WTC11 (cell line): ENCODE measurements at regions of chr10 and their contacts with region 1.

Region 1: GRCh38 chr10:67788025-67788886 is 49.7 kb downstream of the DNAJC12 start:
- DNase-seq: peak; percentile 92
- ATAC-seq: peak; percentile 97
- H3K4me3 Mint-ChIP-seq: peak overlapping the region; percentile 25; the same call in 1 of the 2 replicates
- H3K27ac Mint-ChIP-seq: no peak overlapping the region
- H3K4me1 Mint-ChIP-seq: peaks cover 34% of the 10 kb centered on the region
- H3K27me3 Mint-ChIP-seq: no peaks in the 10 kb centered on the region; the same call in 1 of the 2 replicates
- CTCF ChIP-seq: peak; percentile 87

Region 2: GRCh38 chr10:67452892-67453291 is 335.4 kb before region 1 on chr10:
- CTCF ChIA-PET with region 1: no interaction called
- POLR2A ChIA-PET with region 1: no interaction called
- DNase-seq: no peak
- ATAC-seq: no peak
- H3K4me3 Mint-ChIP-seq: no peak overlapping the region
- H3K27ac Mint-ChIP-seq: no peak overlapping the region
- H3K4me1 Mint-ChIP-seq: no peaks in the 10 kb centered on the region
- H3K27me3 Mint-ChIP-seq: no peaks in the 10 kb centered on the region
- CTCF ChIP-seq: no peak

Region 3: GRCh38 chr10:67764012-67764822 is 24.0 kb before region 1 on chr10:
- CTCF ChIA-PET with region 1: interaction called, 14 read pairs
- POLR2A ChIA-PET with region 1: interaction called, 9 read pairs
- DNase-seq: peak; percentile 95
- ATAC-seq: peak; percentile 76
- H3K4me3 Mint-ChIP-seq: peak overlapping the region; percentile 89
- H3K27ac Mint-ChIP-seq: peak overlapping the region; percentile 48
- H3K4me1 Mint-ChIP-seq: peaks cover 4% of the 10 kb centered on the region
- H3K27me3 Mint-ChIP-seq: peaks cover 21% of the 10 kb centered on the region
- CTCF ChIP-seq: no peak

Region 4: DNA sequence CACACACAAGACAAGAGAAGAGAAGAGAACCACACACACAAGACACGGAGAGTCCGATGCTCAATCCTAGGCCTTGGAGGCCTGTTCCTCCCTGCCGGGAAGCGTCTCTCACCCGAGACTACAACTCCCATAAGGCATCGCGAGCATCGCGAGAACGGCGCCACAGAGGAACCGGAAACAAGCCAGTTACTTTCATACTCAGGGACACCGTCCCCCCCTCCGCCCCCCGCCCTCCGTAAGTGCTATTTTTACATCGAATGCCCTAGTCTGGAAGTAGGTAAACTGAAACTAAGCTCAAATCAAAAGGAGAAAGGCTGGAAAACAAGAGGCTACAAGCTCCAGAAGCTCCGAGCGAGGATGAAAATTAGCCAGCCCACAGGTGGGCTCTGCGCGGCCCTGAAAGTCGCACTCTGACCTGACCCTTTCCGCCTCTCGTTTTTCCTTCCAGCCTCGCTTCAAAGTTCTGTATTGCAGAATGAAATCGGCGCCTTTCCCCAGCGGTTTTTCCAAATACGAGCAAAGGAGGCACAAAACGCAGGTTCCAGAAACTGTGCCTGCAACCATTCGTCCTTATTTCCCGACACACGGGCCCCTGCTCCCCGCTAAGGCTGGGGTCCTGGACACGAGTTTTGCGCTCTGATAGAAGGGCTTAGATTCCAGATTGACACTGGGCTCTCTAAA is 61.2 kb after region 1 on chr10:
- CTCF ChIA-PET with region 1: interaction called, 44 read pairs
- POLR2A ChIA-PET with region 1: no interaction called
- DNase-seq: peak; percentile 96
- ATAC-seq: peak; percentile 99
- H3K4me3 Mint-ChIP-seq: peak overlapping the region; percentile 95
- H3K27ac Mint-ChIP-seq: peak overlapping the region; percentile 94
- H3K4me1 Mint-ChIP-seq: peaks cover 2% of the 10 kb centered on the region; the same call in 1 of the 2 replicates
- H3K27me3 Mint-ChIP-seq: no peaks in the 10 kb centered on the region; the same call in 1 of the 2 replicates
- CTCF ChIP-seq: no peak

Region 5: GRCh38 chr10:67884313-67884841 is 96.1 kb after region 1 on chr10 and contains the start of gene SIRT1:
- CTCF ChIA-PET with region 1: interaction called, 10 read pairs
- POLR2A ChIA-PET with region 1: no interaction called
- DNase-seq: peak; percentile 96
- ATAC-seq: peak; percentile 87
- H3K4me3 Mint-ChIP-seq: peak within 1 kb of the TSS; percentile 91
- H3K27ac Mint-ChIP-seq: peak within 1 kb of the TSS; percentile 96
- H3K4me1 Mint-ChIP-seq: peaks cover 20% of the 10 kb centered on the region
- H3K27me3 Mint-ChIP-seq: no peaks in the 10 kb centered on the region
- CTCF ChIP-seq: no peak
- total RNA-seq, gene SIRT1: 51.3 to 55.5 TPM (median 53.9 TPM) in 3 replicates

Region 6: DNA sequence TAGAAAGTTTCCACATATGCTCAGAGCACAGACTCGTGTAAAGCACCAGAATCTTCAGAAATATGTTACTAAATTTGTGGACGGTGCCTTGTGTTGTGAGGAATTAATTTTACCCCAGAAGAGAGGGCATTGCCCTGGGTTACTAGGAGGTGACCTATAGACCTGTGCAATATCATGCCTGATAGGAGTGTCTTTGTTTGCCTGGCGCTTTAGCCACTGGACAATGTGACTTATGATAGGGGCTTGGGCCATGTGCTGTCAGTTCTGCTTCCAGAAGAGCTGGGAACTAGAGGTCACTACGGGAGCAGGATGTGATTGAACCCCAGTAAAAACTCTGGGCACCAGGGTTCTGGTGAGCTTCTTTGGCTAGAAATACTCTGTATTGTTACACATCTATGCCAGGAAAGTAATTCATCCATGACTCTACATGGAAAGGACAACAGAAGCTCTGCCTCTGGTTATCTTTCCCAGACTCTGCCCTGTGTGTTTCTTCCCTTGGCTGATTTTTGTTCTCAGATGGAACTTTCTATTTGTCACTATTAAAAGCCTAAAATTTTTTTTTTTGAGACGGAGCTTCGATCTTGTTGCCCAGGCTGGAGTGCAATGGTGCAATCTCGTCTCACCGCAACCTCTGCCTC is 171.7 kb after region 1 on chr10:
- CTCF ChIA-PET with region 1: no interaction called
- POLR2A ChIA-PET with region 1: no interaction called
- DNase-seq: no peak
- ATAC-seq: no peak
- H3K4me3 Mint-ChIP-seq: no peak overlapping the region
- H3K27ac Mint-ChIP-seq: no peak overlapping the region
- H3K4me1 Mint-ChIP-seq: peaks cover 13% of the 10 kb centered on the region
- H3K27me3 Mint-ChIP-seq: no peaks in the 10 kb centered on the region
- CTCF ChIP-seq: no peak

Region 7: DNA sequence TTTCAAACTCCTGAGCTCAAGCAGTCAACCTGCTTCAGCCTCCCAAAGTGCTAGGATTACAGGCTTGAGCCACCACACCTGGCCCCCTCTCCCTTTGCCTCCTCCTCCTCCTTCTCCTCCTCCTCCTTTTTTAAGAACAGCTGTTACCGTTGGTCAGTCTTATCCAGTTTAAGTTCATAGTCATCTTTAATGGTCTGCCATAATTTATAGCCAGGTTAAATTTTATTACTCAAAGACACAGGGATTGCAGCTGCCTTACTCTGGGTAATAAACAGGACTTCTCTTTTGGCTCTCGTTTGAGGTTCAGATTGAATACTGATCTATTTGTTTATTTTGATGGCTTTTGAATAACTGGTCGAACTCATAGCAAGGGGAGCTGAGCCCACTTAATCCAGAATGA is 408.4 kb after region 1 on chr10:
- CTCF ChIA-PET with region 1: interaction called, 10 read pairs
- POLR2A ChIA-PET with region 1: no interaction called
- DNase-seq: no peak
- ATAC-seq: no peak
- H3K4me3 Mint-ChIP-seq: no peak overlapping the region
- H3K27ac Mint-ChIP-seq: no peak overlapping the region
- H3K4me1 Mint-ChIP-seq: no peaks in the 10 kb centered on the region
- H3K27me3 Mint-ChIP-seq: no peaks in the 10 kb centered on the region
- CTCF ChIP-seq: no peak